ENCODE measurements at regions of chr2 and their contacts with region 1.

Region 1: GRCh38 chr2:31812051-31812798 is 198.6 kb downstream of the MEMO1 start:
- DNase-seq: peak; percentile 56 to 69
- ATAC-seq: peak; percentile 72 to 83
- H3K4me3 ChIP-seq: peak overlapping the region in 1 of 4 donors; percentile 16
- H3K27ac ChIP-seq: peak overlapping the region; percentile 90 to 96 (median 91)
- H3K4me1 ChIP-seq: peaks cover 36 to 41% of the 10 kb centered on the region in 2 donors
- H3K27me3 ChIP-seq: no peaks in the 10 kb centered on the region
- CTCF ChIP-seq: no peak
- POLR2A ChIP-seq: peak in 1 of 2 donors; percentile 43

Region 2: DNA sequence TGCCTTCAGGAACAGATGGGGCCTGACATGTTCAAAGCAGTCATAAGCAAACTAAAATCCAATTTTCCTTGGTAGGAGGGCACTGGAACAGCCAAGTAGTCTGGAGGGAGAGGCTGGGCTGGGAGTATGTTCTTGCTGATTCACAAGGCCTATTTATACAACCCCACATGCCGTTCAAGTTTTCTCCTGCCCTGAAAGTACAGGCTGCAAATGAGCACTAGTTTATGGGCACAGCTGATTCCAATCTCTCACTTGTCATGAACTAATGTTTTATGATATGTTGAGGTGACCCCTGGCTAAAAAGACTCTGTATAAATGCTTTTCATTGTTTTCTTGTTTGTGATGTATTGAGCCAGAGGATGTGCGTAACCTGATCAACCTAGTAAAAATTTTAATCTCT is 48.1 kb before region 1 on chr2:
- in situ Hi-C with region 1: no loop called
- intact Hi-C with region 1: loop called (anchors 10 kb)
- DNase-seq: peak; percentile 39 to 43
- ATAC-seq: peak; percentile 95 to 99
- H3K4me3 ChIP-seq: no peak overlapping the region
- H3K27ac ChIP-seq: peak overlapping the region; percentile 32 to 80 (median 61)
- H3K4me1 ChIP-seq: peaks cover 8 to 16% of the 10 kb centered on the region in 2 donors
- H3K27me3 ChIP-seq: no peaks in the 10 kb centered on the region
- CTCF ChIP-seq: no peak
- POLR2A ChIP-seq: no peak

Region 3: DNA sequence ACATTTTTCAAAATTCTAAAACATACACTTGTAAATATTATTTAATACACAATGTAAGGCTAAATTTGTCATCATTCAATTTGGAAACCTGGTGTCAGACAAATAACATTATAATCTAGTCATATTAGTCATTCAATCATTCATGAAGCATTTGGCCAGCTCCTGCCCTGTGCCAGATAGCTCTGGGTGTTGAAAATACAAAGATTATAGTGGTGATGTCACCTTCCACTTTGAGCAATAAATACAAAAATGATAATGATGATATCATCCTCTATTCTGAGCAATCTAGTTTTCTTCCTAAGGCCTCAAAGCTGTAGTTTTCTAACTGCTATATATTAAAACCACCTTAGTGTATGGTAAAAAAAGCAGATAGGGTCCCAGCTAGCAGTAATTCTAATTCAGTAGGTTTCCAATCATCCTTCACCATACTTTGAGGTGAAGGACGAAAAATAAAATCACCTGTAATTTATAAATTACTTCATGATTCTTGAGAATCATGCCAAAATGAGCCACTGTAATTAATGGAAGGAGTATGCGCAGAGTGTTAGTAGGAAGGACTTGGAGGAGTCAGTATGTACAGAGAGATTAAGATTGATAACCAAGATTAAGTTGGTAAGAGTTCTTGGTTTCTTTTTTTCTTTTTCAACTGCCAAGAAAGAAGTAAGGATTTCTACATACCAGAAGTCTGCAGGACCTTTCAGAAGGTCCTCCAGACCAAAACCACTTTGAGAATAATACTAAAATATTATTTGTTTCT is 175.4 kb after region 1 on chr2:
- in situ Hi-C with region 1: no loop called
- intact Hi-C with region 1: loop called (anchors 5 kb)
- DNase-seq: no peak
- ATAC-seq: peak; percentile 37 to 53
- H3K4me3 ChIP-seq: no peak overlapping the region
- H3K27ac ChIP-seq: peak overlapping the region; percentile 57 to 81 (median 70)
- H3K4me1 ChIP-seq: peaks cover 30 to 47% of the 10 kb centered on the region in 2 donors
- H3K27me3 ChIP-seq: no peaks in the 10 kb centered on the region
- CTCF ChIP-seq: no peak
- POLR2A ChIP-seq: no peak